ENCODE measurements at regions of chr9 and their contacts with region 1.

Region 1: DNA sequence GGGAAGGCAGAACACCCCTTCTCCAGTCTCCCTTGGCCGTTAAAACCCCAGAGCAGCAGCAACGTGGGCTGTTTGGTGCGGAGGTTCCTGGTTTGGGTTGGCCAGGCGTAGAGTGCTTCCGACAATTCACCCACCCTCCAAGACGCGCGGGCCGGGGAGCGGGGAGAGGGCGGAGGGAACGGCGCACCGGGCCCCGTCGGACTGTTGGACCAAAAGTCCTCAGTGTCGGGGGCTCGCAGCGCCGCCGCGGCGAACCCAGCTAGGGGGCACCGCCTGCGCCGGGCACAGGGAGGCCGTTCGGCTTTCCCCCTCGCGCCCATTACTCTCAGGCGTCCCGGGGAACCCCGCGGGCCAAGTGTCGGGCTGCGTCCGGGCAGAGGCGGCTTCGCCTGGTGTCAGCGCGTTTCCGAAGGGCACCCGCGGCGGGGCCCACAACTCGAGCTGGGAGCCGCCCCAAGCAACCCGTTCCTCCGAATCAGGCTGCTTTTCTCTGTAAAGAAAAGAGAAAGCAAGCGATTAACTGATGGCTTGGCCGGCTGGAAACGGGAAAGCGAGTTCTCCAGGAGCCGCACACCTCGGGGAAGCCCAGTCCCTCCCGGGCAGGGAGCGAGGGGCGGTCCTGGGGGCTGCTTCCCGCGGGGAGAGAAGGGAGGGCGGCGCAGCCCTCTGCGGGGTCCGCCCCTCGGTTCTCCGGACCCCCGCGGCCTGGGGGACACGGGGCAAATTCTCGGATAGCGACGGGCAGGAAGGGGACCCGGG is 145.5 kb downstream of the ERCC6L2 start:
- DNase-seq: peak; percentile 54
- H3K4me3 Mint-ChIP-seq: peak overlapping the region; percentile 79
- H3K27ac Mint-ChIP-seq: peak overlapping the region; percentile 91
- H3K4me1 Mint-ChIP-seq: peaks cover 75% of the 10 kb centered on the region
- H3K27me3 Mint-ChIP-seq: no peaks in the 10 kb centered on the region

Region 2: GRCh38 chr9:95425910-95426551 is 594.9 kb before region 1 on chr9:
- intact Hi-C with region 1: no loop called
- DNase-seq: no peak
- H3K4me3 Mint-ChIP-seq: peak overlapping the region; percentile 42
- H3K27ac Mint-ChIP-seq: no peak overlapping the region
- H3K4me1 Mint-ChIP-seq: peaks cover 9% of the 10 kb centered on the region
- H3K27me3 Mint-ChIP-seq: peaks cover 3% of the 10 kb centered on the region

Region 3: DNA sequence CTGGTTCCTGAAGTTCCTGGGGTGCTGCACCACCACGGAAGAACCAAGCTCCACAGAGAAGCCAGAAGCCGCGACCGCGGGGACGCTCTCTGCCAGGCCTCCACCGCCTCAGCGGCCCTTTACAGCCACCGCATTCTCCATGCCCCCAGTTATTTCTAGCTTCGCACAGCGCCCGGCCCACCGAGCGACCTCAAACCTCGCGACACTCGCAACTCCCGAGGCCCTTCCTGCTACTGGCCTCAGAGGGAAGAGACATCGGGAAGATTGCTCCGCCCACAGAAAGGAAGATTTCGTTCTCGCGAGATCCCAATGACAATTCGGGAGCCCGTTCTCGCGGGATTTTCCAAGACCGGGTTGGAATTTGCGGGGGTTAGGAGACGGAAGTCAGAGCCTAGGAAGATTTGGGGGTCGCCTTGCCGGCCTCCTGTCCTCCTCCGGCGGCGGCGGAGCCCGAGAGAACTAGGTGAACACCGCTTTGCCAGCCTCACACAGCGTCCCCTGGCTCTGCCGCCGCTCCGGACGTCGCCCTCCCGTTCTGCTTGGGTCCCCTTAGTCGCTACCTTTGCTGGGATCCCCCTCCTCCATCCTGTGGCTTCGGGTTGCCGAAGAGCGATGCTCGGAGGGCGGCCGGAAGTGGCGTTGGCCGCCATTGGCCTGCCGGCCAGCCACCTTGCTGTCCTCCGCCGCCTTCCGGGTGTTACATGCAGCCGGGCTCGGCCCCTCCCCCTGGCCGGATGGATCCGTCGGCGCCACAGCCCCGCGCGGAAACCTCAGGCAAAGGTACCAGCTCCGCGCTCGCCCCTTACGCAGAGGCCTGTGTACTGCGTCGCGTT is 145.4 kb before region 1 on chr9 and contains the start of gene ERCC6L2:
- intact Hi-C with region 1: loop called (anchors 1 kb)
- DNase-seq: peak; percentile 91
- H3K4me3 Mint-ChIP-seq: no peak within 1 kb of the TSS
- H3K27ac Mint-ChIP-seq: no peak within 1 kb of the TSS
- H3K4me1 Mint-ChIP-seq: peaks cover 30% of the 10 kb centered on the region
- H3K27me3 Mint-ChIP-seq: no peaks in the 10 kb centered on the region
- total RNA-seq, gene ERCC6L2: 28.2 and 33.0 TPM in 2 replicates

Region 4: GRCh38 chr9:96009690-96010472 is 11.1 kb before region 1 on chr9:
- intact Hi-C with region 1: loop called (anchors 1 kb)
- DNase-seq: peak; percentile 74
- H3K4me3 Mint-ChIP-seq: no peak overlapping the region
- H3K27ac Mint-ChIP-seq: peak overlapping the region; percentile 92
- H3K4me1 Mint-ChIP-seq: peaks cover 54% of the 10 kb centered on the region
- H3K27me3 Mint-ChIP-seq: no peaks in the 10 kb centered on the region

Region 5: DNA sequence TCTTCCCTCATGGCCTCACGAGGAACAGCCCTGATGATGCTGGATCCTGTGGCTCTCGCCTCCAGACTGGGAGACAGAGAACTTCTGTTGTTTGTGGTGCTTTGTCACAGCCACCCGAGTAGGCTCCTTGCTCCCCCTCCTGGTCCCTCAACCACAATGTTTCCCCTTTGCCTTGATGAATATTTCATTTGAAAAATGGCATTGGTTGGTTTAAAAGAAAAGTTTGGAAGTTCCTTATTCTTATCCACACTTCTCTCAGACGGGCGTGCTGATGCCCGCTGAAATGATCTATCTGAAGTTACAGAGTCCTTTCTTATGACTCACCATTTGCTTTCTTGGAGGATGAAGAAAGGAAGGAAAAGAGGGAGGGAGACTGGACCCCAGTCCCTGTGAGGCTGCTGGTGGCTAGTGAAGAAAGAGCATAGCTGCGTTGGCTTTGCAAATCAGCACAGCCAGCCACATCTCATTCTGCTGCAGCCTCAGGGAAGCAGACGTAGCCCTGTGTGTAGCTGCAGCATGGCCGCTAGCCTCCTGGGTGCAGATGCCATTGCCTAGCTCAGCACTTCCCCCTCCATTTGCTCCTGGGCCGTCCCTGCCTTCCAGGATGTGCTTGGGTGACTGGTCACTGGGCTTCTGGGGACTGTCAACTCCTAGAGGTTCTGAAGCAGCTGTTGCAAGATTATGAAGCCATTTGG is 40.5 kb after region 1 on chr9:
- intact Hi-C with region 1: loop called (anchors 5 kb)
- DNase-seq: peak; percentile 23
- H3K4me3 Mint-ChIP-seq: no peak overlapping the region
- H3K27ac Mint-ChIP-seq: no peak overlapping the region
- H3K4me1 Mint-ChIP-seq: peaks cover 23% of the 10 kb centered on the region
- H3K27me3 Mint-ChIP-seq: no peaks in the 10 kb centered on the region

Region 6: GRCh38 chr9:96150324-96151227 is 129.6 kb after region 1 on chr9:
- intact Hi-C with region 1: loop called (anchors 2 kb)
- DNase-seq: peak; percentile 52
- H3K4me3 Mint-ChIP-seq: peak overlapping the region; percentile 44
- H3K27ac Mint-ChIP-seq: peak overlapping the region; percentile 74
- H3K4me1 Mint-ChIP-seq: peaks cover 41% of the 10 kb centered on the region
- H3K27me3 Mint-ChIP-seq: peaks cover 9% of the 10 kb centered on the region

Region 7: DNA sequence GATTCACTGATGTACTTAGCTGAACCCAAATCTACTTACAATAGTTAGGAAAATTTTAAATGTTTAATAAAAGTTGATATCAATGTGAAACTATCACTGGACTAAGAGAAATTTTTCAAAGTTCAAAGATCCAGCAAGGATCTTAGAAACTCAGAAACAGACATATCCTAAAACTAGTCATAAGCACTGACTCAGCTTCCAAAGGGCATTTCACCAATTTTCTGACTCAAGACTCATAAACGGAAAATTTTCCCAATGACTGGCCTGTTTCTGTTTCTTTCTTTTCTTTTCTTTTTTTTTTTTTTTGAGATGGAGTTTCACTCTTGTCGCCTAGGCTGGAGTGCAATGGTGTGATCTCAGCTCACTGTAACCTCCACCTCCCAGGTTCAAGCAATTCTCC is 532.1 kb after region 1 on chr9:
- intact Hi-C with region 1: loop called (anchors 5 kb)
- DNase-seq: no peak
- H3K4me3 Mint-ChIP-seq: no peak overlapping the region
- H3K27ac Mint-ChIP-seq: peak overlapping the region; percentile 11
- H3K4me1 Mint-ChIP-seq: peaks cover 49% of the 10 kb centered on the region
- H3K27me3 Mint-ChIP-seq: no peaks in the 10 kb centered on the region

Measured in activated T-helper 2 cell treated with anti-CD3 and anti-CD28 coated beads, Interferon-gamma antibody, Interleukin-2, Interleukin-4, amounts not matched to agents 10 μg/mL and 5 μg/mL and 100 μg/mL, durations not matched to agents 14 hours and 24 hours and 36 hours (primary cell).